ENCODE measurements at regions of chr2 and their contacts with region 1.

Region 1: DNA sequence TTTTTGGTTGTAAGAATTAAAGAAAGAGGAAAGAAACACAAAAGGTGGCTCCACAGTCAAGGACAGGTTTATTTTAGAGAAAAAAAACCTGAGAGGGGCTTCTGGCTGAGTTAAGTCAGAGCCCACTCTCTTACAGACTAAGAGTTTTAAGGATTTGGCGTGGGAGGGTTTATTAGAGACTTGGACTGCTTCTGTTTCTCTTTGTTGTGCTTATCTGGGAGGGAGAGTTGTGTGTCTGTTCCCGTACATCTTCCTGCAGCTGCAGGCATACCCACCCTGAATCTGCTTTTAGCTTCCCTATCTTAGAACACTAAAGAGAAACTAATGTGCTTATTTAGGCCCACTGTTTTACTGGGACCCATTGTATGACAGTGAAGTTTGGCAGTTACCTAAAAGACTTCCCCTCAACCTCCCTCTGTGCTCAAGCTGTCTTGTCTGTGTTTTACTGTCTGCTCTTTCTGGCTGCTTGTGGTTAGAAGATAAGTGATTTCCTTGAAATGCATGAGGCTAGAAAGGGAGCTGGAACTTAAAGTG is 2.7 kb downstream of the RSAD2 start:
- DNase-seq: peak in 2 of 4 experiments; percentile 63 to 91
- ATAC-seq: peak; percentile 91
- H3K4me3 ChIP-seq: no peak overlapping the region
- H3K27ac ChIP-seq: peak overlapping the region; percentile 77
- H3K4me1 ChIP-seq: peaks cover 17 to 53% of the 10 kb centered on the region in 2 experiments; a peak in 4 of 5 replicates
- H3K27me3 ChIP-seq: no peaks in the 10 kb centered on the region
- CTCF ChIP-seq: no peak
- EP300 ChIP-seq: peak; percentile 91
- POLR2A ChIP-seq: no peak
- RAD21 ChIP-seq: peak; percentile 7 to 24; a peak in 3 of 4 replicates

Region 2: DNA sequence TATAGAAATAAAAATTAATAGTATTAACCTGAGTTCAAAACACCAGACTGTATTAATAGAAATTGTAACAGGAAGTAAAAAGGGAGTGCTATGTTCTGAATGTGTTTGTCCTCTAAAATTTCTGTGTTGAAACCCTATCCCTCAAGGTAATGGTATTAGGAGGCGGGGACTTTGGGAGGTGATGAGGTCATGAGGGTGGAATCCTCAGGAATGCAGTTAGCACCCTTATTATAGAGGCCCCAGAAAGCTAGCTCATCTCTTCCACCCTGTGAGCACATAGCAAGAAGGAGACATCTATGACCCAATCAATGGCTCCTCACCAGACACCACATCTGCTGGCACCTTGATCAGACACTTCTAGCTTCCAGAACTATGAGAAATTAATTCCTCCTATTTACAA is 139.0 kb before region 1 on chr2:
- CTCF ChIA-PET with region 1: no interaction called
- POLR2A ChIA-PET with region 1: no interaction called
- in situ Hi-C with region 1: no loop called
- intact Hi-C with region 1: no loop called
- DNase-seq: no peak
- ATAC-seq: no peak
- H3K4me3 ChIP-seq: no peak overlapping the region
- H3K27ac ChIP-seq: no peak overlapping the region
- H3K4me1 ChIP-seq: no peaks in the 10 kb centered on the region
- H3K27me3 ChIP-seq: no peaks in the 10 kb centered on the region
- CTCF ChIP-seq: no peak
- EP300 ChIP-seq: no peak
- POLR2A ChIP-seq: no peak
- RAD21 ChIP-seq: no peak

Region 3: DNA sequence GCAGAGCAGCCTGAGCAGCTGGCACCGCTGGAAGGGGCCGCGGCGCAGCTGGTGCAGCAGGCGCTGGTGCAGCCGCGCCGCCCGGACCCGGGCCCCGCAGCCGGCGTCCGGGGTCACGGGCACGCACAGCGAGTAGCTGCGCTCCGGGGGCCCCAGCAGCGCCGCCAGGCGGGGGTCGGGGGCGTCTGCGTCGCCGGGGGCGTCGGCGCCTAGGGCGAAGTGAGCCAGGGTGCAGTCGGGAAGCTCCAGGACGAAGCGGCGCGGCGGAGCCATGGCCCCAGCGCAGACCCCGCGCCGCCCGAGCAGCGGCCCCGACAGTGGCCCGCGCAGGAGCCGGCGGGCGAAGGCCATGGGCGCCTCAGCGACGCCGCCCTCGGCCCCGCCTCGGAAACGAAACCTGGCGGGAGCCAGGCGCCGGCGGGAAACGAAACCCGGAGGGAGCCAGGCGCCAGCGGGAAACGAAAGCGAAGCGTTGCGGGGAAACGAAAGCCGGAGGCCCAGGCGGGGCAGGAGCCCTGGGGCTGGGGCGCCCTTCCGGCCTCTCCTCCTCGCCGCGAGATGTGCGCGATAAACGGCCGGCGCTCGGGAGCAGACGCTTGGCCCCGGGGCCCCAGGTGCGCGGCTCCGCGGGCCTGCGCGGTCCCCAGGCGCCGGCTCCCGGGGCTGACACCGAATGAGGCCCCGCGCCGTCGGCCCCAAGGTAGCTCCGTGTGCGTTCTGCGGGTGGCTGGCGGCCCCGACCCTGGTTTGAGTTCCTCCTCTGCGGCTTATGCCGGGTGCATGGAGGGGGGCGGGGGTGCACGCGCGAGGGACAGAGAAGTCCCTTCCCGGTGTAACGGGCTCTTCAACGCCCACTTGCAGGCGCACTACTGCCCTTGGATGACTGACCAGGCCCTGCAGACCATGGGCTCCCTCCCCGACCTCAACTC is 14.7 kb before region 1 on chr2 and contains the start of gene CMPK2:
- CTCF ChIA-PET with region 1: no interaction called
- POLR2A ChIA-PET with region 1: interaction called, 7 read pairs
- in situ Hi-C with region 1: no loop called
- intact Hi-C with region 1: loop called (anchors 1 kb)
- DNase-seq: peak; percentile 75 to 84 (median 82)
- ATAC-seq: peak; percentile 88
- H3K4me3 ChIP-seq: peak within 1 kb of the TSS; percentile 58
- H3K27ac ChIP-seq: peak within 1 kb of the TSS; percentile 86
- H3K4me1 ChIP-seq: peaks cover 14 to 19% of the 10 kb centered on the region in 2 experiments
- H3K27me3 ChIP-seq: no peaks in the 10 kb centered on the region
- CTCF ChIP-seq: peak; percentile 31 to 46 (median 36); a peak in 3 of 6 replicates
- EP300 ChIP-seq: peak; percentile 40; the same call in 1 of the 2 replicates
- POLR2A ChIP-seq: peak; percentile 57; the same call in 1 of the 2 replicates
- RAD21 ChIP-seq: peak in 1 of 2 experiments; percentile 33; a peak in 2 of 4 replicates
- polyA plus RNA-seq, gene CMPK2: 2.6 to 2.9 TPM

Region 4: DNA sequence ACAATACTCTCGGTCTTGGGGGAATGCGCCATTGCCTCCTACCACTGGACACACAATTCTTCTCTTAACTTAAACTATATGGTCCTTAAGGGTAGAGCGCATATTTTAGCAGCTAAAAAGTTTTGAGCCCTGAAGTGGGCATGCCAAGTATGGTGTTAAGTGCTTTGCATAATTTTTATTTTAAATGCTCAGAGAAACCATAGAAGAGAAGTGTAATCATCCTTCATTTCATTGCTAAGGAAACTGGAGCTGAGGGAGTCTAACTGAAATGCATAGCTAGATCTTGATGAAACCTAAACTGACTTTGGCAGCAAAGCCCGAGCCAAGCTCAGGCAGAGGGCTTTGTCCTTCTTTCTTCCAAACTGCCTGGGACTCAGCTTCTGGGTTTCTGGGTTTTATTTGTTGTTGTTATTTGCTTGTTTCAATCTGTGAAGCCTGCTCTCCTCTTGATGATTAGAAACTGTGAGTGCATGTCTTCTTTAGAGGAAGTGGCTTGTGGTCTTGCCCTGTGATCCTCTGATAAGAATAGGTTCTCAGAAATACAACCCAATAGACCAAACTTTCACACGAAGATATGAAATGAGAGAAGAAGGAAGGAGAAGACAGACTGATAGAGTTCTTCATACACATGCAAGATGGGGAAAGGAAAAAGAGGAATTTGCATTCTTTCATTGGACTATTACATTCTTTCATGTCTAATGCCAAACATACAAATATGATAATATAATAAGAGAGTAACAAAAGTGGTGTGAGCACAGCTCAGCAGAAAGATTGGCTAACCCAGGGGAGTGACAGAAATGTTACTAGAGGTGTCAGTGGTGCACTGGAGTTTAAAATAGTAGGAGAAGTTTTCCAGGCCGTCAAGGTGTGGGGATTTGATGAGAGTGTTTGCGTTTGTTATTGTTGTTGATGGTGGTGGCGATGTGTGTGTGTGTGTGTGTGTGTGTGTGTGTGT is 29.4 kb after region 1 on chr2:
- CTCF ChIA-PET with region 1: no interaction called
- POLR2A ChIA-PET with region 1: interaction called, 3 read pairs
- in situ Hi-C with region 1: no loop called
- intact Hi-C with region 1: loop called (anchors 1 kb)
- DNase-seq: peak in 3 of 4 experiments; percentile 30 to 82 (median 66)
- ATAC-seq: peak; percentile 94
- H3K4me3 ChIP-seq: no peak overlapping the region
- H3K27ac ChIP-seq: 0 out of 3 replicates have a peak overlapping the region, but pooled peaks have one; percentile 29
- H3K4me1 ChIP-seq: peaks cover 8 to 21% of the 10 kb centered on the region in 2 experiments; a peak in 4 of 5 replicates
- H3K27me3 ChIP-seq: 0 out of 5 replicates have a peak, but pooled peaks cover 0 to 4% of the 10 kb centered on the region in 2 experiments
- CTCF ChIP-seq: no peak
- EP300 ChIP-seq: peak; percentile 96
- POLR2A ChIP-seq: no peak
- RAD21 ChIP-seq: peak in 1 of 2 experiments; percentile 22; a peak in 1 of 4 replicates